MCF 10A (cell line): ENCODE measurements at regions of chr4 and their contacts with region 1.

Region 1: DNA sequence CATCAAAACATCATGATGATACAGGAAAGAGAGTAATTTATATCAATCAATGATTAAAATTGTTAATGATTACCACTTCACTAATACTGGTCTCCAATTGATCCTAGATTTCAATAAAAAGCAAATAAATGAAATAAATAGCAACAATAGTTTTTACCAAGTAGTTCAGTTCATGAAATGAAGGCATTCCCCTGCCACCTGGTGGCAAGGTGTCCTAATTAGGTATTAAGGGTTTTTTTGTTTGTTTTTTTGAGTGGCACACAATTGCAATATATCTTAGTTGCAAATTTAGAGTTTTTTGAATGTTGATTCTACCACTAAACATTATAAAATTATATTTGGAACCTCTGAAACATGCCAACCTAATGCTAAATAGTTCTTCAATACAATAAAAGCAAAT is 157.4 kb upstream of the PDE5A start:
- DNase-seq: peak; percentile 41
- H3K4me3 Mint-ChIP-seq: no peak overlapping the region
- H3K27ac Mint-ChIP-seq: no peak overlapping the region
- H3K4me1 Mint-ChIP-seq: no peaks in the 10 kb centered on the region
- H3K27me3 Mint-ChIP-seq: no peaks in the 10 kb centered on the region
- CTCF ChIP-seq: peak; percentile 44

Region 2: DNA sequence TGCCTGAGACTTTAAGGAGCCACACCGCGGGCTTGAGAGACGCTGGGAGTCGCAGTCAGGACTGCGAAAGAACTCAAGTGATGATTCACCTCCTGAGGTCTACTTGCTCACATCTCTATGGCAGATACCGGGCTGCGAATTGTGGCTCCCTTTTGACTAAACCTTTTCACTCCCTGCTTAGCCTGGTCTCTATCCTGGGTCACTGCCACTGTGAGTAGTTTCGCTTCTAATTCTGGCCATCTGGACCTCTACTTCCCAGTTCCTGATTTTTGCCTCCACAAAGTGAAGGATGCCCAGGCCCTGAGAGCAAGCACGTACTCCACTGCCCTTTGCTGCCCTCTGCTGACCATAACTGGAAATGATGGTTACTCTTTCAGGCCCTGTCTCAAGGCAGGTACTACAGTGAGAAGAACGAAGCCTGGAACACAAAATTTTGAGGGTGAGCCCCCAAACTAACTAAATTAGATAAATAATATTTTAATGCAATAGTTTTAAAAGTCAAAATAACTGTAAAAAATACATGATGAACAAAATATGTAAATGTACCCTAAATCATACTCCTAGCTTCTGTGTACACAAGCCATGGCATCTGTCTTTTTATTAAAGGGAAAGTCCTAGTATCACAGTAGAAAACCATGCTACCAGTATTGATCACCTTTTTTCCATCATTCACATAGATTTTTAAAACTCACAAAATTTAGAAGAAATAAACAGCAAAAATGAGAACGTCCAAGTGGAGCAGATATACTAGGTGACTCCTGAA is 263.9 kb after region 1 on chr4:
- CTCF ChIA-PET with region 1: interaction called, 6 read pairs
- POLR2A ChIA-PET with region 1: no interaction called
- intact Hi-C with region 1: loop called (anchors 2 kb)
- DNase-seq: peak; percentile 84
- H3K4me3 Mint-ChIP-seq: no peak overlapping the region
- H3K27ac Mint-ChIP-seq: no peak overlapping the region
- H3K4me1 Mint-ChIP-seq: peaks cover 13% of the 10 kb centered on the region
- H3K27me3 Mint-ChIP-seq: no peaks in the 10 kb centered on the region
- CTCF ChIP-seq: peak; percentile 73

Region 3: GRCh38 chr4:120109406-120109805 is 323.4 kb after region 1 on chr4:
- CTCF ChIA-PET with region 1: no interaction called
- POLR2A ChIA-PET with region 1: no interaction called
- intact Hi-C with region 1: no loop called
- DNase-seq: no peak
- H3K4me3 Mint-ChIP-seq: no peak overlapping the region
- H3K27ac Mint-ChIP-seq: no peak overlapping the region
- H3K4me1 Mint-ChIP-seq: no peaks in the 10 kb centered on the region
- H3K27me3 Mint-ChIP-seq: no peaks in the 10 kb centered on the region
- CTCF ChIP-seq: no peak